Aorta (tissue), 5 donors: ENCODE measurements at regions of chr11 and their contacts with region 1.

Region 1: DNA sequence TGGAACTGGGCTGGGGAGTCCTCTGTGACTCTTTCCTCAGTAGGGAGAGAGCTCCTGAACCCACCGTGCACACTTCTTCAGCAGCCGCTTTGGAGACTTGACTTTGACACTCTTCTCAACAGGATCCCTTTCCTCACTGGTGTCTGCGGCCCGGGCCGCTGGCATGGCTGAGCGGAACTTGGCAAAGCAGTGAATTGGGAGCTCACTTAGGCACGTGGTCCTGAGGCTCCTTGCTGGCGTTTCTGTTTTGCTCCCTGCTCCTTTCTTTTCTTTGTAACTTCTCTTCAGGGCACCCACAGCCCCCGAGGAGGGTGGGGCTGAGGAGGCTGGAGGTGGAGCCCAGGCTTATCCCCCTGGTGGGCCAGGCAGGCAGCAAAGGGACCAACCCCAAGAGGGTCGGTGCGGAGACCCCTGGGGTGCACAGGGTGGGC is 8.4 kb upstream of the KCNQ1OT1 start:
- DNase-seq: peak in 1 of 2 donors; percentile 85
- ATAC-seq: peak; percentile 62
- H3K4me3 ChIP-seq: no peak overlapping the region
- H3K27ac ChIP-seq: no peak overlapping the region
- H3K4me1 ChIP-seq: no peaks in the 10 kb centered on the region
- H3K27me3 ChIP-seq: no peaks in the 10 kb centered on the region

Region 2: DNA sequence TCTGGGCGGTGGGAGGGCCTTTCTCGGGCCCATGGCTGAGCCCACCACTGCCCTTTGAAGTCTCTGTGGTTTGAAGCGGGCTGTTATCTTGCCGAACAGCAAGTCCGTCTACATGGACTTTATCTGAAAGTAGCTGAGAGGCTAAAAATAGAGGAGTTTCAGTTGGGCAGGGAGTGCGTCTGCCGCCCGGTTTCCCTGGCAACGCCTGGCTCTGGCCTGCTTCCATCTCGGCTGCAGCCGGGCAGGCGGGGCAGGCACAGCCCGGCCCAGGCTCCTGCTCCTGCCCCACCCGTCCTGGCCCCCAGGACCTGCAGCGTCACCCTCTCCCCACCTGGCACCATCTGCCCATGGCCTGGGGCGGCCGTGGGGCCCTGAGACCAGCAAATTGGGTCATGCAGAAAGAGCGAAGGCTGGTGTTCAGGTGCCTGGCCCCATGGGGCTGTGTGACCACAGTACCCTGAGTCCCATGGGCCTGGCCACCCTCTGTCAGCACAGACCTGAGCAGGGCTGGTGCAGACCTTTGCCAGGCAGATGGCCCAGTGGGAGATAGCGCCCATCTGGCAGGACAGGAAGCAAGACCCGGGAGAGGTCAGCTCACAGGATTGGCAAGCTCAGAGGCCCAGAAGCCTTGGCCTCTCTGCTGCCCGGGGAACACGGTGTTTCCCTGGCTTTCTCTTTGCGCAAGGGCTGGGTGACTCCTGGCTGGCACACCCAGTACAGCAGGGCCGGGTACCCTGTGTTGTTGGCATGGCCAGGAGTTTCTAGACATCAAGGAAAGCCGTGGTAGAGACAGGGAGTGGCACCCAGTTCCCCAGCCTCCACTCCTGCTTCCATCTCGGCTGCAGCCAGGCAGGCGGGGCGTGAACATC is 70.7 kb after region 1 on chr11:
- intact Hi-C with region 1: loop called in 1 of 2 experiments (anchors 5 kb)
- DNase-seq: peak; percentile 86 to 93
- ATAC-seq: peak; percentile 88
- H3K4me3 ChIP-seq: no peak overlapping the region
- H3K27ac ChIP-seq: peak overlapping the region in 1 of 2 donors; percentile 71
- H3K4me1 ChIP-seq: no peaks in the 10 kb centered on the region
- H3K27me3 ChIP-seq: no peaks in the 10 kb centered on the region